Common myeloid progenitor, CD34-positive (primary cell): ENCODE measurements at regions of chr10 and their contacts with region 1.

Region 1: GRCh38 chr10:21068025-21068656 is 171.0 kb upstream of the NEBL start:
- DNase-seq: no peak
- H3K4me3 ChIP-seq: no peak overlapping the region
- H3K27ac ChIP-seq: no peak overlapping the region
- H3K4me1 ChIP-seq: no peaks in the 10 kb centered on the region
- H3K27me3 ChIP-seq: peaks cover 0 to 2% (median 0%) of the 10 kb centered on the region in 5 experiments

Region 2: GRCh38 chr10:20343036-20343435 is 725.1 kb before region 1 on chr10:
- CTCF ChIA-PET with region 1: no interaction called
- POLR2A ChIA-PET with region 1: interaction called, 11 read pairs
- DNase-seq: no peak
- H3K4me3 ChIP-seq: no peak overlapping the region
- H3K27ac ChIP-seq: no peak overlapping the region
- H3K4me1 ChIP-seq: no peaks in the 10 kb centered on the region
- H3K27me3 ChIP-seq: no peaks in the 10 kb centered on the region

Region 3: DNA sequence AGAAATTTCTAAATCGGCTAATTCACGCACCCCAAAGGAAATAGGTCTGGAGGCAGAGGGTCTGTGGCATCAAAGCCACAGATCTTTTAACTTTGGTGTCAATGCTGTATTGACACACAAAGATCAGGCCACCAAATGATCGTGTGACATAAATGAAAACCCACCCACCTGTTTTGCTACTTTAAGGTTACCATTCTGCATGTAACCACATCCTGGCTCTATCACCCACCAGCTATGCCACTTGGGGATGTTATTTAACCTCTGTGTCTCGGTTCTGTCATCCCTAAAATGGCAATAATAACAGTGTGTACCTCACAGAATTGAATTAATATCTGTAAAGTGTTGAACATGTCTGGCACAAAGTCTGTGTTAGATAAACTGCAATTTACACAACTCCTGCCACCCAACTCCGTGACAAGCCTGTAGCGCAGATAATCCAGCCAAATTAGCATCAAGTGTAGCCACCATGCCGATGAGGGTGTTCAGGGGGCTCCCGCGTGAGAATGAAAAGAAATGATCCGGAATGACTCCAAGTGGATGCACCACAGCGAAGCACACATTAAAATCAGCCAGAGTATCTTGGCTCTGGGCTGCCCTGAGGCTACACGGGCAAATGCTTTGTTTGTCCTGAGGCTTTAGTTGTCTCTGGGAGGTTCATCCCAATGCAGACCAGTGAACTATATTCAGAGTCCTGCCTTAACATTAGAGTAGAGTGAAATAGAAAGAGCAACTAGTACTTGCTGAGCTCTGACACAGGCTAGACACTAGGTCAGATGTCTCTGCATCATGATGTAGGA is 12.6 kb before region 1 on chr10:
- CTCF ChIA-PET with region 1: no interaction called
- POLR2A ChIA-PET with region 1: no interaction called
- DNase-seq: no peak
- H3K4me3 ChIP-seq: no peak overlapping the region
- H3K27ac ChIP-seq: no peak overlapping the region
- H3K4me1 ChIP-seq: no peaks in the 10 kb centered on the region
- H3K27me3 ChIP-seq: no peaks in the 10 kb centered on the region

Region 4: DNA sequence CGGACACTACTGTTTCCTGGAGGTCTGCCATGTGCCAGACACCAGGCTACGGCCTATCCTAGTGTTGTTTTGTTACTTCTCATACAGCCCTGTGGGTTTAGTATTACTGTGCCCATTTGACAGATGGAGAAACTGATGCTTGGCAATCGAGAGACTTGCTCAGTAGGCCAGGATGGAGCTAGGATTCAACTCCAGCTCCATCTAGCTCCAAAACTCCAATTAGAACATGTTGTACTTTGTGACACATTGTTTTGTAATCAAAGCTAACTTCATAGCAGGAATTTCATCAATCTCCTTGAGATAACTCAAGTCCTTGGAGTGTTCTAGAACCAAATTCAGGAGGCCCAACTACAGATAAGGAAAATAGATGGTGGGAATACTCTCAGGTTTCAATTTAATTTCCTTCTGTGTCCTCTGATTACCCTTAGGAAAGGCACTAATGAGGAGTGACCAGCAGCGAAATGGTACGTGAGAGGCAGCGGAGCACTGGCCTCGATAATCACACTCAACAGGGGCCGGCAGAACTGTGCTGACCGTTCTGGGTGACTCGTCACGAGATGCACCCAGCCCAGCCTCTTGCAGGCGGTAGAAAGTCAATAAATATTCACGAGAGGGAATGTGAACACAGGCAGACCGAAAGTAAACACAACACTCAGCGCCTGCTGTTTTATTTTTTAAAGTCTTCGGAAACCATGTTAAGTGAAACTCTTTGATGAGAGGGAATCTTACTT is 98.6 kb after region 1 on chr10:
- CTCF ChIA-PET with region 1: no interaction called
- POLR2A ChIA-PET with region 1: no interaction called
- DNase-seq: no peak
- H3K4me3 ChIP-seq: no peak overlapping the region
- H3K27ac ChIP-seq: no peak overlapping the region
- H3K4me1 ChIP-seq: no peaks in the 10 kb centered on the region
- H3K27me3 ChIP-seq: peaks cover 4 to 22% (median 10%) of the 10 kb centered on the region in 5 experiments